ENCODE measurements at regions of chr5 and their contacts with region 1.

Region 1: DNA sequence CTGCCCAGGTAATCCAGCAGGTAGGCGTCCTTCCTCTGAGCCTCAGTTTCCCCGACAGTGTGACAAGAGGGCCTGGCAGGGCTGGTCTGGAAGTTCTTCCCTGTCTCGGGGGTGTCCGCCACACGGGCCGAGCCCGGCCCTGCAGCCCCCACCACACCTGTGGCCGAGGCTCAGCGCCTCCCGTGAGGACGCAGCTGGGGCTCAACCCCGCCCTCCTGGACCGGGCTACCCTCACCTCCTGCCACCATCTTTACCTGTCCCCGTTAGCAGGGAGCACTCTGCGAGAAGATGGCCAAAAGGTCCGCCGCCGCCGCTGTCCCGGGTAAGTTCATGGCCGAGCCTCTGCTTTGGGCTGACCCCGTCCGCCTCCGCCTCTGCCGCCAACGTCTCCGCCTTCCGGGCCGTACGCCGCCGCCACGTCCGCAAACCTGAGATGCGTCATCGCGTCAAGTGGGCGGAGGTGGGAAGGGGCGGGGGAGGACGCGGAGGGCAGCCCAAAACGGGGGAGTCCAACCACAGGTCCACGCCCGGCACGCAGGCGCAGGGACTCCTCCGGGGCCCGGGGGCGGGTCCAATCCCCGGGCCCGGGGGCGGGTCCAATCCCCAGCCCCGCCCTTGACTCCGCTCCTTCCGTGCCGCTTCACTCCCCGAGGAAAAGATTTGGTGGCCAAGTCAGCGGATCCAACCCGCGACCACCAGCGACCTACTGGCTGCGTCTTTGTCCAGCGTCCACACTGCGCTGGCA is at the start of gene LYSMD3:
- DNase-seq: peak; percentile 99 to 100 (median 99)
- ATAC-seq: peak; percentile 100
- H3K4me3 ChIP-seq: peak within 1 kb of the TSS; percentile 70
- H3K27ac ChIP-seq: peak within 1 kb of the TSS; percentile 92
- H3K4me1 ChIP-seq: no peaks in the 10 kb centered on the region
- H3K27me3 ChIP-seq: peaks cover 2% of the 10 kb centered on the region
- total RNA-seq, gene LYSMD3: 19.5 to 34.0 (median 24.9) TPM

Region 2: GRCh38 chr5:90434116-90434714 is 95.2 kb before region 1 on chr5:
- intact Hi-C with region 1: loop called in 1 of 4 experiments (anchors 5 kb)
- DNase-seq: peak in 2 of 3 donors; percentile 15 to 67
- ATAC-seq: peak; percentile 57
- H3K4me3 ChIP-seq: no peak overlapping the region
- H3K27ac ChIP-seq: no peak overlapping the region
- H3K4me1 ChIP-seq: no peaks in the 10 kb centered on the region
- H3K27me3 ChIP-seq: no peaks in the 10 kb centered on the region

Region 3: DNA sequence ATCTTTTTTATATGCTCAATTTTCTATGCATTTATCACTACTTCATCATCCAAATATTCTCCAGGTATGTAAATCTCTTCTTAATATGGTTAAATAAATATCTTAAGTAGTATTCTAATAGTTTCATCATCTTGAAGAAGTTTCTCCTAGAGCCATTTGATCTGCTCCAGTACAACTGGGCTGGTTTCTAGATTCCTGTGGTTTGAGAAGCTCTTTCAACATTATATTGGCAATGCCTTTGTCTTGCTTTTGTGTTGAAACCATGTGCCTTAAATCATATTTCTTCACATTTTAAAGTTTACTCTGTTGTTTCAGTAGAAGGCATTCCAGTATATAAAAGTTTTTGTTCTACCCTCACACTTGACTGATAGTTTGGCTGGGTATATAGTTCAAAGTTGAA is 82.4 kb before region 1 on chr5:
- intact Hi-C with region 1: loop called in 1 of 4 experiments (anchors 10 kb)
- DNase-seq: no peak
- ATAC-seq: no peak
- H3K4me3 ChIP-seq: no peak overlapping the region
- H3K27ac ChIP-seq: no peak overlapping the region
- H3K4me1 ChIP-seq: no peaks in the 10 kb centered on the region
- H3K27me3 ChIP-seq: no peaks in the 10 kb centered on the region

Region 4: GRCh38 chr5:90474235-90475109 is 54.9 kb before region 1 on chr5 and contains the starts of genes MBLAC2 and POLR3G:
- intact Hi-C with region 1: loop called in 2 of 4 experiments (anchors 5 to 10 kb)
- DNase-seq: peak; percentile 93 to 97 (median 96)
- ATAC-seq: peak; percentile 99
- H3K4me3 ChIP-seq: peak within 1 kb of the TSS; percentile 51
- H3K27ac ChIP-seq: peak within 1 kb of the TSS; percentile 50
- H3K4me1 ChIP-seq: no peaks in the 10 kb centered on the region
- H3K27me3 ChIP-seq: no peaks in the 10 kb centered on the region
- total RNA-seq, gene MBLAC2: 2.6 to 4.6 (median 4.3) TPM
- total RNA-seq, gene POLR3G: 0.83 to 1.4 (median 0.97) TPM

Region 5: GRCh38 chr5:90585337-90585986 is 56.1 kb after region 1 on chr5:
- intact Hi-C with region 1: no loop called
- DNase-seq: no peak
- ATAC-seq: no peak
- H3K4me3 ChIP-seq: no peak overlapping the region
- H3K27ac ChIP-seq: no peak overlapping the region
- H3K4me1 ChIP-seq: no peaks in the 10 kb centered on the region
- H3K27me3 ChIP-seq: no peaks in the 10 kb centered on the region